ENCODE measurements at regions of chr9 and their contacts with region 1.

Region 1: DNA sequence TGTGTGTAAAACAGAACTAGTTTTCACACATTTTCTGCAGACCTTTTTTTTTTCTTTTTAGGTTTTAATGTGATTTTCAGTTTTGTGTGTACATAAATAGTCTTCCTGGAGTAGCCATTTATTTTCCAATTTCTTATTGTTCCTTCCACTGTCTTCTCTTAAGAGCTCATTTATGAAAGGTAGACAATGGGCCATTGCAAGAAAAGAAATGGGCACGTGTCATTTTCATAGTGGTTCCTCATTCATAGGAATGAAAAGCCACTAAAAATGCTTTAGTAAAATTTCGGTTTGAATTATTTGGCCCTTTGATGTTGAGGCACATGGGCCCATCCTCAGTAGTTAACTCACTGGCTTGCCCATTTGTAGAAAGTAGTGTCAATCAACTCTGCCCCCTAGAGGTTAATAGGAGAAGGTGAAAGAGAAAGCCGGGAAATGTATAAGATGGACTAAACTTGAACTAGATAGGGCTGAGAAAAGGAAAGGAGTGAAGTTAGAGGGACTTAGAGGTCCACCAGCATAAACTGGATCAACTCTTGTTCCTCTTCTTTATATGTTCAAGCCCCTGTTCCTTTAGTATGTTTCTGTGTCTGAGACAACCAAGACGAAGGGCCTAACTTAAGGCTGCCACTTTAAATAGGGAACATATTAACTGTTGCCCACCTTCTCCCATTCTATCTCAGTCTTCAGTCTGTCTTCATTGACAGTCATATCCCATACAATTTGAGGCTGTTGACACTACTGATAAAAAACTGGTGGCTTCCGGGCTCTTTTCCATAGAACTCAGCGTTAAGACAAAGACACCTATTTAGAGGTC is 72.6 kb downstream of the SMARCA2 start:
- DNase-seq: peak; percentile 25
- ATAC-seq: peak; percentile 71
- H3K4me3 ChIP-seq: no peak overlapping the region
- H3K27ac ChIP-seq: no peak overlapping the region
- H3K4me1 ChIP-seq: no peaks in the 10 kb centered on the region
- H3K27me3 ChIP-seq: no peaks in the 10 kb centered on the region
- CTCF ChIP-seq: peak; percentile 58
- EP300 ChIP-seq: no peak
- POLR2A ChIP-seq: no peak
- RAD21 ChIP-seq: no peak

Region 2: DNA sequence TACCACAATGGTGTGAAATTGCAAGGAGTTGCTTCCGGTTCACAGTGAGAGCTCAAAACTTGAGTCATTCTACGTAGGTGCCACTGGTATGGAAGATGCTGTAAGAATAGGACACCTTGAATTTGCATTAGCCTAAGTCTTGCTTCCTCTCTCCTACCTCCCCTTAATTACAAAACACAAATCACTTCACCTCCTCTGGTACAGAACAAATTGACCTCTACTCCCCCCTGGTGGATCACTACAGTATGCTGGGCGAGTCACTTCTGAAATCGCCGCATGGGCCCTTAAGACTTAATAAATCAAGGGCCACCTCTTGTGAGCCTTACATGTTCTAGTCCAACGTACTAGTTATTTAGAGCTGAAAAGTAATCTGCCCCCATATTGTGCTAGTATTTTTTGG is 217.9 kb before region 1 on chr9:
- CTCF ChIA-PET with region 1: no interaction called
- POLR2A ChIA-PET with region 1: no interaction called
- in situ Hi-C with region 1: no loop called
- intact Hi-C with region 1: loop called (anchors 5 kb)
- DNase-seq: peak; percentile 18
- ATAC-seq: peak; percentile 89
- H3K4me3 ChIP-seq: no peak overlapping the region
- H3K27ac ChIP-seq: no peak overlapping the region
- H3K4me1 ChIP-seq: no peaks in the 10 kb centered on the region
- H3K27me3 ChIP-seq: peaks cover 0 to 2% of the 10 kb centered on the region in 2 experiments; a peak in 1 of 5 replicates
- CTCF ChIP-seq: peak; percentile 56
- EP300 ChIP-seq: no peak
- POLR2A ChIP-seq: no peak
- RAD21 ChIP-seq: 0 out of 2 replicates have a peak, but pooled peaks have one; percentile 28

Region 3: GRCh38 chr9:1922026-1922425 is 165.7 kb before region 1 on chr9:
- CTCF ChIA-PET with region 1: no interaction called
- POLR2A ChIA-PET with region 1: no interaction called
- in situ Hi-C with region 1: loop called (anchors 10 kb)
- intact Hi-C with region 1: loop called (anchors 5 kb)
- DNase-seq: peak; percentile 5
- ATAC-seq: peak; percentile 53; the same call in 1 of the 3 replicates
- H3K4me3 ChIP-seq: no peak overlapping the region
- H3K27ac ChIP-seq: no peak overlapping the region
- H3K4me1 ChIP-seq: no peaks in the 10 kb centered on the region
- H3K27me3 ChIP-seq: peaks cover 0 to 8% of the 10 kb centered on the region in 2 experiments; a peak in 1 of 5 replicates
- CTCF ChIP-seq: peak; percentile 26
- EP300 ChIP-seq: no peak
- POLR2A ChIP-seq: no peak
- RAD21 ChIP-seq: no peak

Region 4: GRCh38 chr9:1929722-1930621 is 157.7 kb before region 1 on chr9:
- CTCF ChIA-PET with region 1: no interaction called
- POLR2A ChIA-PET with region 1: no interaction called
- in situ Hi-C with region 1: loop called (anchors 10 kb)
- intact Hi-C with region 1: no loop called
- DNase-seq: no peak
- ATAC-seq: no peak
- H3K4me3 ChIP-seq: no peak overlapping the region
- H3K27ac ChIP-seq: no peak overlapping the region
- H3K4me1 ChIP-seq: no peaks in the 10 kb centered on the region
- H3K27me3 ChIP-seq: peaks cover 1 to 11% of the 10 kb centered on the region in 2 experiments; a peak in 1 of 5 replicates
- CTCF ChIP-seq: no peak
- EP300 ChIP-seq: no peak
- POLR2A ChIP-seq: no peak
- RAD21 ChIP-seq: no peak